ENCODE measurements at regions of chr19 and their contacts with region 1.

Region 1: GRCh38 chr19:16247353-16248182 is 49.9 kb downstream of the AP1M1 start:
- DNase-seq: peak; percentile 93
- ATAC-seq: peak; percentile 99
- H3K4me3 ChIP-seq: no peak overlapping the region
- H3K27ac ChIP-seq: no peak overlapping the region
- H3K4me1 ChIP-seq: peaks cover 12% of the 10 kb centered on the region
- H3K27me3 ChIP-seq: no peaks in the 10 kb centered on the region
- CTCF ChIP-seq: peak; percentile 95

Region 2: DNA sequence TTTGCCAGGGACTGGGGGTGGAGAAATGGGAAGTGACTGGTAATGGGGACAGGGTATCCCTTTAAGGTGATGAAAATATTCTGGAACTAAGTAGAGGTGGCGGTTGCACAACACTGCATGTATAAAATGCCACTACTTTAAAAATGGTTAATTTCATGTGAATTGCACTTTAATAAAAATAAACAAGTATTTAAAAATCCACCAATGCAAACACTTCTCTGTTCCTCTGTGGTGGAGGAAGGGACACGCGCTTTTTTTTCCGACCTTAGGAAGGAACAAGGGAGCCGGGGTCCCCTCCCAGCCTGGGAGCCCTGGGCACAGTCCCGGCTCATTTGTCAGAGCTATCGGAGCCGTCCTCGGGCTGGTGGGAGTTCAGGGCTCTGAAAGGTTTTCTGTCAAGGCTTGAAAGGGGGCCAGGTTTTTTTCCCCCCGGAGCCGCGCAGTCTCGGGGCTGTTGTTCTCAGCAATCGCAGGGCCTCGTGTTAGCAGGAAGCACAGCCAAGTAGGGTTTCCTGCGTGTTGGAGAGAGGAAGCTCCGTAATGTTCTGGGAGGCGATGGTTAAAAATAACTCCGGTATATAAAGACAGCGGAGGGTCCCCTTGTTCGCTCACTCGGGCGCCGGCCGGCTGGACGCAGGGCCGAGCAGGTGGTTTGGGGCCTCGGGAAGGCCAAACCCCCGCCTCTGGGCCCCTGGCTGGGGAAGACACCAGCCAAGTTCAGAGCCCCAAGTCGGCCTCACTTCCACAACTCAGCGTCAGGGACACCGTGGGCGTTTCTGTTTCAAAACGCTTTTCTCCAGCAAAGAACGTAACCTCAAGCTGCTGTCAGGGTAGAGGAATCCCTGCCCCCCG is 35.9 kb after region 1 on chr19:
- intact Hi-C with region 1: no loop called
- DNase-seq: peak; percentile 90
- ATAC-seq: peak; percentile 77
- H3K4me3 ChIP-seq: peak overlapping the region; percentile 35
- H3K27ac ChIP-seq: peak overlapping the region; percentile 97
- H3K4me1 ChIP-seq: peaks cover 64% of the 10 kb centered on the region
- H3K27me3 ChIP-seq: no peaks in the 10 kb centered on the region
- CTCF ChIP-seq: no peak

Region 3: GRCh38 chr19:16382775-16383543 is 135.4 kb after region 1 on chr19:
- intact Hi-C with region 1: loop called (anchors 2 kb)
- DNase-seq: peak; percentile 87
- ATAC-seq: peak; percentile 88
- H3K4me3 ChIP-seq: no peak overlapping the region
- H3K27ac ChIP-seq: peak overlapping the region; percentile 80
- H3K4me1 ChIP-seq: peaks cover 22% of the 10 kb centered on the region
- H3K27me3 ChIP-seq: no peaks in the 10 kb centered on the region
- CTCF ChIP-seq: peak; percentile 84

Measured in upper lobe of right lung (tissue), 1 donor.